ENCODE measurements at regions of chr2 and their contacts with region 1.

Region 1: DNA sequence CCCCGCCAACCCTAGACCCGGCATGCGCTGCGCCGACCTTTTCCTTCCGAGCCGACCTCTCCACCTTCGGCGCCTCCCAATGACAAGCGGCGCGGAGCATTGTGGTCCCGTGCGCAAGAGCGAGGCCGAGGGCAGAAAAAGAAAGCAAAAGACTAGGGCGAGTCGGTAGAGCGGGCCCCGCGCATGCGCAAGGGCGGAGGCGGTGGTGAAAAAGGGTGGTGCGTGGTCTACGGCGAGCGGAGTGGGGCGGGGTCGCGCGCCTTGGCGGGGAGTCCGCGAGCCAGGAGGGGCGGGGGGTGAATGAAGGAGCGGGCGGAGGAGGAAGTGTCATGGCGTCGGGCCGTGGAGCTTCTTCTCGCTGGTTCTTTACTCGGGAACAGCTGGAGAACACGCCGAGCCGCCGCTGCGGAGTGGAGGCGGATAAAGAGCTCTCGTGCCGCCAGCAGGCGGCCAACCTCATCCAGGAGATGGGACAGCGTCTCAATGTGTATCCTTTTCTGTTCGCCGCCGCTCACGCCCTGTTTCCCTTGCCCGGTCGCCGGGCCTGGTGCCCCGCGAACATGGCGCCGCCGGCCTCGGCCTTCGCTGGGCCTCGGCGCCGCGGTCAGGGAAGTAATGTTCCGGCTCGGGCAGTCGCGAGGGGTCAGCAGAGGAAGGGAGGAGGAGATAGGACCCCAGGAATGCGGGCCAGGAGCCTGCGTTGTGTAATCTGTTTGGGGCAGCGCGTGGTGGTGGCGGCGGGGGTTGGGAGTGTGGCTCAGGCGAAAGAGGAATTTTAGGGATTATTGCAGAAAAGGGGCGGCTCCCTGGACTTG is at the start of gene CCNT2:
- DNase-seq: peak; percentile 99
- H3K4me3 Mint-ChIP-seq: peak within 1 kb of the TSS; percentile 95
- H3K27ac Mint-ChIP-seq: peak within 1 kb of the TSS; percentile 98
- H3K4me1 Mint-ChIP-seq: peaks cover 24% of the 10 kb centered on the region
- H3K27me3 Mint-ChIP-seq: no peaks in the 10 kb centered on the region
- total RNA-seq, gene CCNT2: 31.9 to 33.2 TPM

Region 2: DNA sequence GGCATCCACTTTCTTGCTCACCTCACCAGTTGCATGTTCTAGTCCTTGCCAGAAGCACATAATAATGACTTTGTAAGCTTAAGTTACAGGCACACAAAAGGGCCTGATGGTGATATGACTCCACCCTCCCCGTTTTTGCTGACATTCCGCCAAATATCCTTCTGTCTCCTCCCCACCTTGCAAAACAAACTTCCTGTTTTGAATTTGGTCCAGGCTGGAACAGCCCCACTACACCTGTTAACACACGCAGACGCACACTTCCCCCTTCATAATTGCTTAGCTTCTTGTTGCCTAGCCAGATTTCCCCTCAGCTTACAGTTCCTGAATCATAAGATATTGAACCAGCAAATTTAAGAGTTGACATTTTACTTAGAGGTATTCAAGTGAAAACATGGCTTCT is 664.9 kb before region 1 on chr2 and contains the start of gene MGAT5:
- CTCF ChIA-PET with region 1: no interaction called
- intact Hi-C with region 1: loop called (anchors 2 kb)
- DNase-seq: no peak
- H3K4me3 Mint-ChIP-seq: no peak within 1 kb of the TSS
- H3K27ac Mint-ChIP-seq: no peak within 1 kb of the TSS
- H3K4me1 Mint-ChIP-seq: peaks cover 82% of the 10 kb centered on the region
- H3K27me3 Mint-ChIP-seq: peaks cover 2% of the 10 kb centered on the region
- total RNA-seq, gene MGAT5: 11.6 to 13.0 TPM

Region 3: DNA sequence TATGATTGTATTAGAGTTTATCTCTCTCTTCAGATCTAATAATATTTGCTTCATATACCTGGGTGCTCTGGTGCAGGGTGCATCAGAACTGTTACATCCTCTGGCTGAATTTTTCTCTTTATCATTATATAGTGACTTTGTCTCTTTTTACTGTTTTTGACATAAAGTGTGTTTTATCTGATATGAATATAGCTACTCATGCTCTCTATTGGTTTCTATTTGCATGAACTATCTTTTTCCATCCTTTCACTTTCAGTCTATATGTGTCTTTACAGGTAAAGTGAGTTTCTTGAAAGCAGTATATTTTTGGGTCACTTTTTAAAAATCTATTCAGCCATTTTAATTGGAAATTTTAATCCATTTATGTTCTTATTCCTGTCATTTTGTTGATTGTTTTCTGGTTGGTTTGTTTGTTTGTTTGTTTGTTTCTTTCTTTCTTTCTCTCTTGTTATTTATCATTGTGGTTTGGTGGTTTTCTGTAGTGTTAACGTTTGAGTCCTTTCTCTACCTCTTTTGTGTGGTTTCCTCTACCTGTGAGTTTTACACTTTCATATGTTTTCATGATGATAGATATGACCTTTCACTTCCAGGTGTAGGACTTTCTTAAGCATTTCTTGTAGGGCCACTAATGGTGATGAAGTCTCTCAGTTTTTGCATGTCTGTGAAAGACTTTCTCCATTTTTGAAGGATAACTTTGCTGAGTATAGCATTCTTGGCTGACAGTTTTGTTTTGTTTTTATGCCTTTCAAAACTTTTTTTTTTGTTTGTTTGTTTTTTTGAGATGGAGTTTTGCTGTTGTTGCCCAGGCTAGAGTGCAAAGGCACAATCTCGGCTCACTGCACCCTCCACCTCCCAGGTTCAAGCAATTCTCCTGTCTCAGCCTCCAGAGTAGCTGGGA is 54.8 kb after region 1 on chr2:
- CTCF ChIA-PET with region 1: no interaction called
- intact Hi-C with region 1: loop called (anchors 1 kb)
- DNase-seq: no peak
- H3K4me3 Mint-ChIP-seq: no peak overlapping the region
- H3K27ac Mint-ChIP-seq: peak overlapping the region; percentile 6
- H3K4me1 Mint-ChIP-seq: peaks cover 15% of the 10 kb centered on the region
- H3K27me3 Mint-ChIP-seq: peaks cover 3% of the 10 kb centered on the region

Region 4: DNA sequence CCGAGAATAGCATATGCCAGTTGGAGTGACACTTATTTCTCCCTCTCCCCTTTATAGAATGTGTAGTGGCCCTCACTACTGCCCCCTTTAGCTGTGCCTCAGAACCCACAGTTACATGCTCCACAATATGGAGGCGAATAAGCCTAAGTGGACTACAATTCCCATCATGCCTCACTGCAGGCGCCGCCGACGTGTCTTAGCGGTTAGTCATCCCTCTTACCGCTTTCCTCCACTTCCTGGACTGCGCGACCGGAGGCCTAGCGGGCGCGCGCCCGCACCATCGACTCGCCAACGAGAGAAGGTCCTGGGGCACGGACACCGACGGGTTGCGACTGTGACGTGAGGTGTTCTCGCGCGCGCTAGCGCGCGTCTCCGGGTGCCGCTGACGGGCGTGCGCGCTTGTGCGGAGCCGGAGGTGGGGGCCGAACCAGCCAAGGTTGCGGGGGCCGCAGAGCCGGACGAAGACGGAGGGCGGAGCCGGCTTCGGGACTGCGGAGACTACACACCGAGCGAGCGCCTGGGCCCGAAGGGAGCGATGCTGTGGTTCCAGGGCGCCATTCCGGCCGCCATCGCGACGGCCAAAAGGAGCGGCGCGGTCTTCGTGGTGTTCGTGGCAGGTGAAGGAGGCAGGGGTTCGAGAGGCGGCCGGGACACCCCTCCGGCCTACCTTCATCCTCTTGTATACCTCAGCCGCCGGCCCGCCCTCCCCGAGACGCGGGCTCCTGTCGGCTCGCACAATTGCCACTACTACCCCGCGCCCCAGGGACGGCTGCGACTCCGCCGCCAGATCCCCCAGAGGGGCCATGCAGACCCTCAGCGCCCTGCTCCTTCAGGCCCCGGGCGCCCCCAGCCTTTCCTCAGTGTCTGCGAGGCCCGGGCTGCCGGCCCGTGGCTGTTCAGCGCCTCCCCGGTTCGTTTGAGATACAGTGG is 822.9 kb after region 1 on chr2 and contains the start of gene UBXN4:
- CTCF ChIA-PET with region 1: no interaction called
- intact Hi-C with region 1: loop called (anchors 1 kb)
- DNase-seq: peak; percentile 98
- H3K4me3 Mint-ChIP-seq: peak within 1 kb of the TSS; percentile 98
- H3K27ac Mint-ChIP-seq: peak within 1 kb of the TSS; percentile 99
- H3K4me1 Mint-ChIP-seq: peaks cover 30% of the 10 kb centered on the region
- H3K27me3 Mint-ChIP-seq: no peaks in the 10 kb centered on the region
- total RNA-seq, gene UBXN4: 100 to 105 TPM

Measured in activated naive CD4-positive, alpha-beta T cell treated with anti-CD3 and anti-CD28 coated beads for 36 hours (primary cell).